CD4-positive, alpha-beta T cell (primary cell): ENCODE measurements at regions of chr12 and their contacts with region 1.

Region 1: DNA sequence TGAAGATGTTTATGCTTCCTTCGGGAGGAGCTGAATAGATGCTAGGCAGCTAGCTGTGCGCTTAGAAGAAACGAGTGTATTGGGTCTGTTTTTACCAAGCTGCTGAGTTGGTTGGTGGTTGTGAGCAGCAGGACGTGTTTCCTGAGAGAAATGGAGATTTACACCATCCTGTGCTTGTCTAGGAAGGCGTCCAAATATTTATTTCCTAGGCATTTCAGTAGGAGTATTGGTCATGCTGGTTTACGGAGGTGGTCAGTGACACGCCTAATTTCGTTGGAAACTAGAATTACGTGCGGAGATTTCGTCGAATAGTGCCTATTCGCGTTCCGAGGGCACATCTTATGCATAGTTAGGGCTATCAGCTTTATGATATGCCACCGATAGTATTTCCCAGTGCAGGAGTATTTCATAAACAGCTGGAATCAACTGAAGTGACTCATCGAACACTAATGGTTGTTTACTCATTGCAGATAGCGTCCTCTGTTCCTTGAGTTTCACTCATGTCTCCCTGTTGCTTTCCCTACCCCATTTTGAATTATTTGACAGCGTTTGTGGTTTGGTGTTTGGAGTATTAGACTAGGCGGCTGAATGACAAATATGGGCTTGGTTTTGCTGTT is 780 bp downstream of the TBC1D15 start:
- DNase-seq: peak in 7 of 14 experiments; percentile 8 to 58 (median 27)
- ATAC-seq: peak; percentile 20
- H3K4me3 ChIP-seq: peak overlapping the region; percentile 75
- H3K4me3 Mint-ChIP-seq: peak overlapping the region; percentile 97
- H3K27ac ChIP-seq: peak overlapping the region; percentile 97 to 99
- H3K27ac Mint-ChIP-seq: peak overlapping the region; percentile 95
- H3K4me1 ChIP-seq: peaks cover 24% of the 10 kb centered on the region
- H3K4me1 Mint-ChIP-seq: peaks cover 45% of the 10 kb centered on the region
- H3K27me3 ChIP-seq: no peaks in the 10 kb centered on the region
- H3K27me3 Mint-ChIP-seq: peaks cover under 1% of the 10 kb centered on the region
- CTCF ChIP-seq: no peak

Region 2: DNA sequence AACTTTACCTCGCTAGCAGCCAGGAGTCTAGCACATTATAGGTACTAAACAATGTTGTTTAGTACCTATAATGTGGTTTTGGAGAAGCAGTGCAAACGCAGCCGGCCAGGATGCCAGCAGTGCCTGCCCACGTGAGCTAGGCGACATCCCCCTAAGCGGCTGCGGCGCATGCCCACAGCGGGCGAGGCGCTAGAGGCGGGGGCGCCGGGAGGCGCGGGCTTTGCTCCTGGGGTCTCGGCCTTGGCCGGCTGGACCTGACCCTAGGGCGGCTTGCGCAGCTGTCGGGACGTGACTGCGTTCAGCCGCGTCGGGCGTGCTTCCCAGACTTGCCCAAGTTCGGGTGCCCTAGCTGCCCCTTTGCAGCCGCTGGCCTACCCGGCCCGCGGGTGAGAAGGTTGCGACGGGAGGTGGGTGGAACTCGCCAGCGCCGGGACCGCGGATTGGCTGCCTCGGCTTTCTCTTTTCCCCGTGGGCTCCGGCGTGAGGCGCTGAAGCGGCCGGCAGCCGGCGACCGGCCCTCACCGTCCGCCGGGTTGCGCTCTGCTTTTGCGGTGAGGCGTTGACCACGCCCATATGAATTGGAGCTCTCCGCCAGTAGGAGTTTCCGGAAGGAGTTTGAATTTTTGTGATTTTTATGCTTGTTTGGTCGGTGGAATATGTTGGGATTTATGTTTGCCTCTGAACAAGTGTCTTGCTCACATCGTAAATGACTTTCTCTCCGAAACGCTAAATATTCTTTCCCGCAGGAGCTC is 154.2 kb before region 1 on chr12 and contains the start of gene TMEM19:
- CTCF ChIA-PET with region 1: no interaction called
- POLR2A ChIA-PET with region 1: interaction called, 37 read pairs
- intact Hi-C with region 1: loop called in 1 of 2 experiments (anchors 2 kb)
- DNase-seq: peak; percentile 64 to 91 (median 79)
- ATAC-seq: peak; percentile 90
- H3K4me3 ChIP-seq: peak within 1 kb of the TSS; percentile 77
- H3K4me3 Mint-ChIP-seq: peak within 1 kb of the TSS; percentile 92
- H3K27ac ChIP-seq: peak within 1 kb of the TSS; percentile 69 to 78
- H3K27ac Mint-ChIP-seq: peak within 1 kb of the TSS; percentile 87
- H3K4me1 ChIP-seq: peaks cover 20% of the 10 kb centered on the region
- H3K4me1 Mint-ChIP-seq: peaks cover 47% of the 10 kb centered on the region
- H3K27me3 ChIP-seq: no peaks in the 10 kb centered on the region
- H3K27me3 Mint-ChIP-seq: no peaks in the 10 kb centered on the region
- CTCF ChIP-seq: no peak
- total RNA-seq, gene TMEM19: 8.9 to 11.6 TPM

Region 3: DNA sequence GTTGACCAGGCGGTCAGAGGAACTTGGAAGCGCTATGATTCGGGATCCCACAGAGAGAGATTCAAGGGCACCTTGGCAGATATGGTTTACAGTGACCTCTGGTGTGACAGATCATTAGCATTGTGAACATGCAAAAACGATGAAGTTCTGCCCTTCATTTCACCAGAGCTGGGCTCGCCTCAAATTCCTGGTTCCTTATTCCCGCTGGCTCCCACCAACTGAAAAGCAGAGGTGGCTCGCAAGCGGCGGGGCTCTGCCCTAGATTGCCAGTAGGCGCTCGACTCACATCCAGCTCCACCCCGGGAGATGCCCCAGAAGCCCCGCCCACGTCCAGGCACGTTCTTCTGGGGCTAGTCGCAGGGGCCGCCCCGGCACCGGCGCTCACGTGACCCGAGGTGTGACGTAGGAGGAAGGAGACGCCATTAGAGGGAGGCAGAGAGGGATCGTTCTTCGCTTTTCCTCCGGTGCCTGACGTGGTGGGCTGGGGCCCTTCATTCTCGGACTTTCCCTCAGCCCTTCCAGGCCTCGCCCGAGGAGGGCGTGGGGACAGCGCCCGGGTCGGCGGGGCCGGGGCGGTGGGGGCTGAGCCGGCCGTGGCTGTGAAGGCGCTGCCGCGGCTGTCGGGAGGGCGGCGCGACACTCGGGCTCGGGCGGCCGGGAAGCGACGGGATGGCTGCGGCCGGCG is 85.7 kb before region 1 on chr12 and contains the start of gene RAB21:
- CTCF ChIA-PET with region 1: no interaction called
- POLR2A ChIA-PET with region 1: interaction called, 58 read pairs
- intact Hi-C with region 1: loop called (anchors 1 to 2 kb)
- DNase-seq: peak; percentile 96 to 99 (median 98)
- ATAC-seq: peak; percentile 91
- H3K4me3 ChIP-seq: peak within 1 kb of the TSS; percentile 99
- H3K4me3 Mint-ChIP-seq: peak within 1 kb of the TSS; percentile 100
- H3K27ac ChIP-seq: peak within 1 kb of the TSS; percentile 84 to 97
- H3K27ac Mint-ChIP-seq: peak within 1 kb of the TSS; percentile 99
- H3K4me1 ChIP-seq: peaks cover 30% of the 10 kb centered on the region
- H3K4me1 Mint-ChIP-seq: peaks cover 46% of the 10 kb centered on the region
- H3K27me3 ChIP-seq: no peaks in the 10 kb centered on the region
- H3K27me3 Mint-ChIP-seq: peaks cover 26% of the 10 kb centered on the region
- CTCF ChIP-seq: peak; percentile 28
- total RNA-seq, gene RAB21: 106 to 108 TPM

Region 4: GRCh38 chr12:71780237-71780822 is 60.0 kb before region 1 on chr12:
- CTCF ChIA-PET with region 1: interaction called, 16 read pairs
- POLR2A ChIA-PET with region 1: interaction called, 11 read pairs
- intact Hi-C with region 1: no loop called
- DNase-seq: peak; percentile 19 to 70 (median 34)
- ATAC-seq: no peak
- H3K4me3 ChIP-seq: no peak overlapping the region
- H3K4me3 Mint-ChIP-seq: no peak overlapping the region
- H3K27ac ChIP-seq: no peak overlapping the region
- H3K27ac Mint-ChIP-seq: peak overlapping the region; percentile 37
- H3K4me1 ChIP-seq: no peaks in the 10 kb centered on the region
- H3K4me1 Mint-ChIP-seq: peaks cover 16% of the 10 kb centered on the region
- H3K27me3 ChIP-seq: no peaks in the 10 kb centered on the region
- H3K27me3 Mint-ChIP-seq: no peaks in the 10 kb centered on the region
- CTCF ChIP-seq: peak; percentile 80